Psoas muscle (tissue), 8 donors: ENCODE measurements at regions of chr18 and their contacts with region 1.

Region 1: GRCh38 chr18:58847383-58848071 is 17.1 kb upstream of the ZNF532 start:
- DNase-seq: peak; percentile 30 to 54
- ATAC-seq: peak; percentile 4 to 37 (median 8)
- H3K4me3 ChIP-seq: peak overlapping the region; percentile 55
- H3K27ac ChIP-seq: peak overlapping the region; percentile 57
- H3K4me1 ChIP-seq: peaks cover 30% of the 10 kb centered on the region
- H3K27me3 ChIP-seq: no peaks in the 10 kb centered on the region
- CTCF ChIP-seq: no peak

Region 2: DNA sequence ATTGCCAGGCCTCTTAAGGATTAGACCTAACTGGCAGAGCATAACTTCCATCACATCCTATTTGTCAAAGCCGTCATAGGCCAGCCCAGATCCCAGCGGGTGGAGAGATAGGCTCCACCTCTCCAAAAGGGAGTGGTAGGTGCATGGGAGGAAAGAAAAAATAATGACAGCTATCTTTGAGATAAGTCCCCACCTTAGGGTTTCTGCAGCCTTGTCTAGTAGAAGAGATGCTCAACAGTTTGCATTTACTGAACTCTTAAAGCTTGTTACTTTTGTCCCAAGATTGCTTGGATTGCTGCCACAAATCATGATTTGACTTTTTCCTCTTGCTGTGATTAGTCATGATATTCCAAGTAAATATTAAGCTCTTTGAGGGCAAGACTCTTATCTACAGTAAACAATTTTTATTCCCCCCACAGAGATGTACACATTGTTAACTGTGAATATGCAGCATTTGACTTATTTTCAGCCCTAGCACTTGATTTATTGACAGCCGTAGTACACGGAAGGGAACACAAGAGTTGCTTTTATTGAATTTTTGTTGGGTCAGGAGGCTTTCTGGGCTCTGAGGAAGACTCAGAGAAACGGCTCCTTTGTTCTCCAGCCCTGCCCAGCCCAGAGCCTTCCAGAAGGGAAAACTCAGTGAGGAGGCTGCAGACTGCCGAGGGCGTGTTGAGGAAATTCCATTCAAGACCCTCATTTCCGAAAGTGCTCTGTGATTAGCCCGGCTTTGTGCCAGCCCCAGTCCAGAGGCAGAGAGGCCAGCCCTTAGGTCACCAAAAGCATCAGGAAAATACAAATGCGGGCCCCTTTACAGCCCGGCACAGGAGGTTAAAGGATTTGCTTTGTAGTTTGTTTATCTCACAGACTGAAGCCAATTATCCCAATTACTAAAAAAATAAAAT is 58.3 kb before region 1 on chr18:
- intact Hi-C with region 1: loop called in 1 of 2 experiments (anchors 5 kb)
- DNase-seq: peak; percentile 28 to 58
- ATAC-seq: no peak
- H3K4me3 ChIP-seq: no peak overlapping the region
- H3K27ac ChIP-seq: peak overlapping the region; percentile 52
- H3K4me1 ChIP-seq: peaks cover 39% of the 10 kb centered on the region
- H3K27me3 ChIP-seq: no peaks in the 10 kb centered on the region
- CTCF ChIP-seq: no peak

Region 3: GRCh38 chr18:58800582-58800981 is 46.9 kb before region 1 on chr18:
- intact Hi-C with region 1: loop called in 1 of 2 experiments (anchors 5 kb)
- DNase-seq: no peak
- ATAC-seq: no peak
- H3K4me3 ChIP-seq: no peak overlapping the region
- H3K27ac ChIP-seq: no peak overlapping the region
- H3K4me1 ChIP-seq: no peaks in the 10 kb centered on the region
- H3K27me3 ChIP-seq: peaks cover 0 to 1% (median 0%) of the 10 kb centered on the region in 3 donors
- CTCF ChIP-seq: no peak

Region 4: DNA sequence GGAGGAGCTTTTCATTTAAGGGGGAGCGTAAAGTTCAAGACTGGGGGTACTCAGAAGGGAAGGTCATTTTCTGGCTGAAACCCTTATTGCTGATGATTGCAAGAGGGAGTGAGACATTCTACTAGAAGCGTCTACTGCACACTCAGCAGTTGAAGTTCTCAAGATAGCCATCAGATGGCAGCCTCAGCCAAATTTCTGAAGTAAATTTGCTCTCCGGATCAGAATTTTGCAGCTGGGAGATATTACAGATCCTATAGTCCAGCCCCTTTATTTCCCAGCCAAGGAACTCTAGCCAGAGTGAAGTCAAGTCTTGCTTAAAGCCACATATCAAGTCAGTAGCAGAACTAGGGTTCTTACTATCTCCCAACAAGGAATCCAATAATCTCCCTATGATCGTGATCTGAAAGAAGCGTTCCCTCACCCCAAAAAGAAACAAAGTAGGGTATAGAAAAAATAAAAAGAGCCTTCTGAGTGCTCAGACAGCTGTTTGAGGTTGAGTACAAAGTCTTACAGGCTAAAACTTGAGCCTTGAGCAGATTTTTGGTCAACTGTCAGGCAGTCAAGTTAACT is 401.8 kb after region 1 on chr18:
- intact Hi-C with region 1: no loop called
- DNase-seq: no peak
- ATAC-seq: peak in 1 of 4 donors; percentile 54
- H3K4me3 ChIP-seq: no peak overlapping the region
- H3K27ac ChIP-seq: no peak overlapping the region
- H3K4me1 ChIP-seq: no peaks in the 10 kb centered on the region
- H3K27me3 ChIP-seq: peaks cover 0 to 24% (median 10%) of the 10 kb centered on the region in 3 donors
- CTCF ChIP-seq: peak; percentile 71